Dorsolateral prefrontal cortex (tissue), 120 donors: ENCODE measurements at regions of chr5 and their contacts with region 1.

Region 1: DNA sequence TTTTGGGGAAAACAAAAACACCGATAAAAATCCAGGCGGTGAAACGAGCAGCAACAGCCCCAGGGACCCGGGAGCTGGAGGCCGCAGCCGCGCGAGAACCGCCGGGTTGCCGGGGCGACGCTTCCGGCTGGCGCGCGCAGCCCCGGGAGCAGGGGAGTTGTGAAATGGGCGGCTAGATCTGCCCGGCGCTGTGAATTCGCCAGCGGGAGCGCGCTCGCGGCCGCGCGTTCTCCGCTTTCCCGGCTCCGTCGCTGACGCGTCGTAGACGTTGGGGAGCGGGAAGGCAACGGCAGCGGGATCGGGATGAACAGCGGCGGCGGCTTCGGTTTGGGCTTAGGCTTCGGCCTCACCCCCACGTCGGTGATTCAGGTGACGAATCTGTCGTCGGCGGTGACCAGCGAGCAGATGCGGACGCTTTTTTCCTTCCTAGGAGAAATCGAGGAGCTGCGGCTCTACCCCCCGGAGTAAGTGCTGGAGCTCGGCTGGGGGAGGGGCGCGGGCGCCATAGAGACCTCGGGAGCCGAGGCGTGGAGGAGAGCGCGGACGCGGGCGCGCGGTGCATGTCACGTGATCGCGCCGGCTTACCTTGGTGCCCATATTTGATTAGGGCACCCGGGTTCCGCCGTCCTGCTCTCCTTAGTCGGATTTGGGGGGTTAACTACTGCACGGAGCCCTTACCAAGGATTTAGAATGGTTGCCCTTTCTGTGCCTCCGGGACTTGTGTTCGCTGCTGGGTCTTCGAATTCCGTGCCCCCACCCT is at the start of gene SREK1:
- DNase-seq: peak; percentile 85 to 94 (median 92)
- H3K4me3 ChIP-seq: peak within 1 kb of the TSS; percentile 58 to 92 (median 81)
- H3K27ac ChIP-seq: peak within 1 kb of the TSS; percentile 85 to 100 (median 99)
- H3K27me3 ChIP-seq: no peaks in the 10 kb centered on the region
- CTCF ChIP-seq: peak in 21 of 56 donors; percentile 6 to 38 (median 24)
- total RNA-seq, gene SREK1: 53.0 to 95.6 (median 74.5) TPM

Region 2: DNA sequence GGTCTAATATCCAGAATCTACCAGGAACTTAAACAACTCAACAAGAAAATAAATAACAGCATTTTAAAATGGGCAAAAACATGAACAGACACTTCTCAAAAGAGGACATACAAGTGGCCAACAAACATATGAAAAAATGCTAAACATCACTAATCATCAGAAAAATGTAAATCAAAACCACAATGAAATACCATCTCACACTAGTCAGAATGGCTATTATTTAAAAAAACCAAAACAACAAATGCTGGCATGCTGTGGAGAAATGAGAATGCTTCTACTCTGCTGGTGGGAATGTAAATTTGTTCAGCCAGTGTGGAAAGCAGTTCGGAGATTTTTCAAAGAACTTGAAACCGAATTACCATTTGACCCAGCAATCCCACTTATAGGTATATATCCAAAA is 725.6 kb before region 1 on chr5:
- intact Hi-C with region 1: no loop called
- DNase-seq: no peak
- H3K4me3 ChIP-seq: no peak overlapping the region
- H3K27ac ChIP-seq: no peak overlapping the region
- H3K27me3 ChIP-seq: no peaks in the 10 kb centered on the region
- CTCF ChIP-seq: no peak

Region 3: DNA sequence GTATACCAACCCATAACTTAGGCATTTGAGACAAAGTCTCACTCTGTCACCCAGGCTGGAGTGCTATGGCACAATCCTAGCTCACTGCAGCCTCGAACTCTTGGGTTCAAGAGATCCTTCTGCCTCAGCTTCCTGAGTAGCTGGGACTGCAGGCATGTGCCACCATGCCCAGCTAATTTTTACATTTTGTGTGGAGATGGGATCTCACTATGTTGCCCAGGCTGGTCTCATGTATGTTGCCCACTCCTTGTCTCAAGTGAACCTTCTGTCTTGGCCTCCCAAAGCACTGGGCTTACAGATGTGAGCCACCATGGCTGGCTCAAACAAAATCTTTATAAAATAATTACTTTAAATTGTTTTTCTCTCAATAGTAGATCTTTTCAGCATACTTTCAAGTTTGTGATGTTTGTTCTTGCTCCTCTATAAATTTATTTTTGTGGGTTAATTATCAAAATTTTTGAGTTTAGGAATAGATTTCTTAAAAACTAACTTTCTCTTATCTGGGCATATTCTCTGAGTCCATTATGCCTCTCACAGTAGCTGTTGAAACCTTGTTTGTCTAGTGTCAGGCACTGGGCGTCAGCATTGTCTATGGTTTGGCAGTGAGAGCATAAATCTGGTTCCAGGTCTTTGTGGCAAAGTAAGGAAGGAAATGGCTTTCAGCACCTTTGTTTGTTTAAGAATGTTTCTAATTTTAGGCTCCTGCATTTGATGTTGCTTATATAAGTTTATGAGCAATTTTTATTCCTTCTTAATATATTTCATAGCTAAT is 383.6 kb before region 1 on chr5:
- intact Hi-C with region 1: loop called (anchors 10 kb)
- DNase-seq: peak in 9 of 10 donors; percentile 26 to 82 (median 59)
- H3K4me3 ChIP-seq: peak overlapping the region in 2 of 59 donors; percentile 2 to 8
- H3K27ac ChIP-seq: peak overlapping the region in 29 of 59 donors; percentile 1 to 67 (median 32)
- H3K27me3 ChIP-seq: no peaks in the 10 kb centered on the region
- CTCF ChIP-seq: peak in 53 of 56 donors; percentile 23 to 78 (median 54)

Region 4: GRCh38 chr5:66255714-66256113 is 111.5 kb after region 1 on chr5:
- intact Hi-C with region 1: no loop called
- DNase-seq: no peak
- H3K4me3 ChIP-seq: no peak overlapping the region
- H3K27ac ChIP-seq: no peak overlapping the region
- H3K27me3 ChIP-seq: no peaks in the 10 kb centered on the region
- CTCF ChIP-seq: no peak